ENCODE measurements at regions of chr4 and their contacts with region 1.

Region 1: GRCh38 chr4:17347445-17347844 is 164.4 kb downstream of the QDPR start:
- DNase-seq: peak; percentile 9
- H3K4me3 ChIP-seq: no peak overlapping the region
- H3K27ac ChIP-seq: no peak overlapping the region
- H3K4me1 ChIP-seq: no peaks in the 10 kb centered on the region
- H3K27me3 ChIP-seq: no peaks in the 10 kb centered on the region
- CTCF ChIP-seq: peak in 3 of 4 experiments; percentile 22 to 44 (median 37)
- POLR2A ChIP-seq: no peak

Region 2: DNA sequence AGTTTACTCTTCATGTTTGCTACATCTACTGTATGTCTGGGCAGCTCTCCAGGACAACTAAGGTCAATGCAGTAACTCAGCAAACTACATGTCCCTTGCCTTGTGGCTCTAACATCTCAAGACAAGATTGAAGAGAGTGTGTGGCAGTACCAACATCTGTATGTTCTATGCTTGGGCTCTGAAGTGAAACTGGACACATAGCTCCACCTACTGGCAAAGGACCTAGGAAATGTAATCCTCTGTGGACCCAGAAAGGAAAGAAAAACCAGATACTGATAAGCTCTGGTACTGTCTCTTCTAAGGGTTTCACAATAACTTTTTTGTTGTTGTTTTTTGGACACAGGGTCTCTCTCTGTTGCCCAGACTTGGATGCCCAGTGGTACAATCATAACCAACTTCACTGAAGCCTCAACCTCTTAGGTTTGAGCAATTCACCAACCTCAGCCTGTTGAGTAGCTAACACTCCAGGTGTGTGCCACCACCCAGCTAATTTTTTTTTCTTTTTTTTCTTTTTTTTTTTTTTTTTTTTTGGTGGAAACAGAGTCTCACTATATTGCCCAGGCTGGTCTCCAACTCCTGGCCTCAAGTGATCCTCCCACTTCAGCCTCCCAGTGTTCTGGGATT is 100.3 kb after region 1 on chr4:
- intact Hi-C with region 1: loop called (anchors 2 kb)
- DNase-seq: peak; percentile 36
- H3K4me3 ChIP-seq: no peak overlapping the region
- H3K27ac ChIP-seq: no peak overlapping the region
- H3K4me1 ChIP-seq: no peaks in the 10 kb centered on the region
- H3K27me3 ChIP-seq: no peaks in the 10 kb centered on the region
- CTCF ChIP-seq: peak in 3 of 4 experiments; percentile 53 to 62 (median 59)
- POLR2A ChIP-seq: no peak

Region 3: GRCh38 chr4:17468371-17469221 is 121.2 kb after region 1 on chr4:
- intact Hi-C with region 1: loop called (anchors 5 kb)
- DNase-seq: no peak
- H3K4me3 ChIP-seq: no peak overlapping the region
- H3K27ac ChIP-seq: no peak overlapping the region
- H3K4me1 ChIP-seq: no peaks in the 10 kb centered on the region
- H3K27me3 ChIP-seq: no peaks in the 10 kb centered on the region
- CTCF ChIP-seq: peak in 1 of 4 experiments; percentile 46
- POLR2A ChIP-seq: no peak

Measured in prostate gland (tissue), 2 donors.